B cell (primary cell): ENCODE measurements at regions of chr7 and their contacts with region 1.

Region 1: DNA sequence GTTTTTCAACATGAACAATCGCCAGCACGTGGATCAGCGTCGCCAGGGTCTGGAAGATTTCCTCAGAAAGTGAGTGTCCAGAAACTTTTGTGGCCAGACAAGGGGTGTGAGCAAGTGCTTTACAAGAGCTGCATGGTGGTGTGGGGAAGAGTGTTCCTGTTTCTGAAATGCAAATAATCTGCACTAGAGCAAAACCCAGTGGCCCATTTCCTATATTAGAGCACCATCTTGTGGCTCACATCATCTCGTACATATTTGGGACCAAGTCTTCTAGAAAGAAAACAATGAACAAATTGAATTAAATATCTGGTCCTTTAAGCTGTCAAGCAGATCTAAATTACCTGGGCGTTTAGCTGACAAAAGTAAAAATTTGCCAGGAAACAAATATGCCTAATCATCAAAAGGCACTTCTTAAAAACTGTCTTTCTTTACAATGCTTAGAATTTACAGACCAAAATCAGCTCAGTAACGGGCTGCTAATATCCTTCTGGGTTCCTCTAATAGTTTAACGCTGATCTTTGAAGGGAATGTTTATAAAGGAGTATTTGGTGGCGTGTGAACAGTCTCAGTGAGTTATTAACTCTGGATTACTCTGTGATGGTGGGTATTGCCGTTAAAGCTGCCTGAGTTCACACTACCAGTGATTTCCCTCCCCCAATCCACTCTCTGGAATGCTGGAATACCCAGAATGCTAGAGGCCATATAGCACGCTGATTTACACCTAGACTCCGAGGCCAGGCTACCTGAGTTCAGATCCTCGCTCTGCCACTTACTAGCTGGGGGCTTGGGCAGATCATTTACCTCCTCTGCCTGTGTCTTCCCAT is 73.6 kb downstream of the SNX10 start:
- DNase-seq: peak; percentile 89
- ATAC-seq: peak; percentile 95
- H3K4me3 ChIP-seq: no peak overlapping the region
- H3K4me3 Mint-ChIP-seq: no peak overlapping the region
- H3K27ac ChIP-seq: no peak overlapping the region
- H3K27ac Mint-ChIP-seq: peak overlapping the region; percentile 84
- H3K4me1 ChIP-seq: peaks cover 32 to 33% of the 10 kb centered on the region in 2 donors
- H3K4me1 Mint-ChIP-seq: peaks cover 34% of the 10 kb centered on the region
- H3K27me3 ChIP-seq: no peaks in the 10 kb centered on the region
- H3K27me3 Mint-ChIP-seq: no peaks in the 10 kb centered on the region
- CTCF ChIP-seq: peak; percentile 85

Region 2: DNA sequence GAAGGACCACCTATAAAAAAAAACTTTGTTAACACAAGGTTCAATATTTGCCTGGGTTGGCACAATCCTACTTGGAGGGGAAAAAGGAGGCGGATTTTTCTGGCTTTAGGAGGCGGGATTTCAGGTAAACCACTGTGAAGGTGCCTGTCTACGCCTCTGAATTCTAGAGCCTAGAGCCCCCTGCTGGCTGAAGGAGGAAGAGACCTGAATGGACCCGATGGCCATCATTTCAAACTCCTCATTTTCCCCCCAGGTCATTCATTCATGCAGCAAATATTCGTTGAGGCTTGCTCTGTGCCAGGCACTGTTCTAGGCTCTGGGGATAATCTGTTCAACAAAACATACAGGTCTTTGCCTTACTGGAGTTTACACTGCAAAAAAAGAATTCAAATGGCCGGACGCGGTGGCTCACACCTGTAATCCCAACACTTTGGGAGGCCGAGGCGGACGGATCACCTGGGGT is 303.6 kb before region 1 on chr7:
- CTCF ChIA-PET with region 1: interaction called, 8 read pairs
- POLR2A ChIA-PET with region 1: no interaction called
- intact Hi-C with region 1: loop called (anchors 1 kb)
- DNase-seq: peak; percentile 77
- ATAC-seq: peak; percentile 83
- H3K4me3 ChIP-seq: no peak overlapping the region
- H3K4me3 Mint-ChIP-seq: no peak overlapping the region
- H3K27ac ChIP-seq: no peak overlapping the region
- H3K27ac Mint-ChIP-seq: no peak overlapping the region
- H3K4me1 ChIP-seq: no peaks in the 10 kb centered on the region
- H3K4me1 Mint-ChIP-seq: peaks cover 5% of the 10 kb centered on the region
- H3K27me3 ChIP-seq: peaks cover 0 to 38% (median 14%) of the 10 kb centered on the region in 4 experiments
- H3K27me3 Mint-ChIP-seq: peaks cover 60% of the 10 kb centered on the region
- CTCF ChIP-seq: peak; percentile 92

Region 3: DNA sequence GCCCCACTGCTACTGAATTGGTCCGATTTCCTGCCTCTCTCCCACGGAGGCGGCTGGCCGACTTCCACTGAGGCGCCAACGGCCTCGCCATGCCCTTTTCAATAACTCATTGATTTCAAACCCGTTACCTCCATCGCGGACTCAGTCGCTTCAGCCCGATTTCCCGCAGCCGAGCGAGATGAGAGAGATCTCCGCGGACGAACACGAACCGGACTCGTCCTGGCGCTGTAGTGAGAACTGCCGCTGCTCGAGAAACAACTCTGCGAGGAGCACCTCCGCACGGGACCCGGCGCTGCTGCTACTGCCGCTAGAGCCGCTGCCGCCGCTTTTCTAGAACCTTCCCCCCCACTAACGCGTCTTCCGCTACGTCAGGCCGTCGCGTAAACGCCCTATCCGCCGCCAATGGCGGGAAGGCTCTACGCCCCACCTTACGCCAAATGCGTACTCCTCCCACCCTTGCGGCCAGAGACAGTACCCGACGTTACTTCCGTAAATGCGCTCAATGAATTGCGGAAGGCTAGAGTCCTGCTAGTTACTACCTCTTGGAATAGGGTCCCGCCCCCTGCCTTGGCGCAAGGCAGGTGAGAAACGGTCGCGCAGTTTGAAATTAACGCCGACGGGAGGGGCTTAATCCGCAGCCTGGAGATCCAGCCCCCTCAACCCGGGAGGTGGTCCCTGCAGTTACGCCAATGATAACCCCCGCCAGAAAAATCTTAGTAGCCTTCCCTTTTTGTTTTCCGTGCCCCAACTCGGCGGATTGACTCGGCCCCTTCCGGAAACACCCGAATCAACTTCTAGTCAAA is 164.6 kb before region 1 on chr7 and contains the start of gene HNRNPA2B1:
- CTCF ChIA-PET with region 1: interaction called, 84 read pairs
- POLR2A ChIA-PET with region 1: interaction called, 4 read pairs
- intact Hi-C with region 1: loop called (anchors 1 kb)
- DNase-seq: peak; percentile 100
- ATAC-seq: peak; percentile 65
- H3K4me3 ChIP-seq: peak within 1 kb of the TSS; percentile 80 to 100 (median 100)
- H3K4me3 Mint-ChIP-seq: peak within 1 kb of the TSS; percentile 99
- H3K27ac ChIP-seq: peak within 1 kb of the TSS; percentile 97 to 99
- H3K27ac Mint-ChIP-seq: peak within 1 kb of the TSS; percentile 100
- H3K4me1 ChIP-seq: peaks cover 37 to 40% of the 10 kb centered on the region in 2 donors
- H3K4me1 Mint-ChIP-seq: peaks cover 53% of the 10 kb centered on the region
- H3K27me3 ChIP-seq: no peaks in the 10 kb centered on the region
- H3K27me3 Mint-ChIP-seq: no peaks in the 10 kb centered on the region
- CTCF ChIP-seq: no peak
- total RNA-seq, gene HNRNPA2B1: 524 and 536 TPM in 2 replicates

Region 4: GRCh38 chr7:26318921-26319320 is 46.4 kb before region 1 on chr7:
- CTCF ChIA-PET with region 1: interaction called, 8 read pairs
- POLR2A ChIA-PET with region 1: no interaction called
- intact Hi-C with region 1: loop called (anchors 2 kb)
- DNase-seq: no peak
- ATAC-seq: no peak
- H3K4me3 ChIP-seq: no peak overlapping the region
- H3K4me3 Mint-ChIP-seq: no peak overlapping the region
- H3K27ac ChIP-seq: peak overlapping the region in 1 of 2 donors; percentile 74
- H3K27ac Mint-ChIP-seq: peak overlapping the region; percentile 61
- H3K4me1 ChIP-seq: peaks cover 41% of the 10 kb centered on the region in 2 donors
- H3K4me1 Mint-ChIP-seq: peaks cover 68% of the 10 kb centered on the region
- H3K27me3 ChIP-seq: no peaks in the 10 kb centered on the region
- H3K27me3 Mint-ChIP-seq: no peaks in the 10 kb centered on the region
- CTCF ChIP-seq: no peak

Region 5: DNA sequence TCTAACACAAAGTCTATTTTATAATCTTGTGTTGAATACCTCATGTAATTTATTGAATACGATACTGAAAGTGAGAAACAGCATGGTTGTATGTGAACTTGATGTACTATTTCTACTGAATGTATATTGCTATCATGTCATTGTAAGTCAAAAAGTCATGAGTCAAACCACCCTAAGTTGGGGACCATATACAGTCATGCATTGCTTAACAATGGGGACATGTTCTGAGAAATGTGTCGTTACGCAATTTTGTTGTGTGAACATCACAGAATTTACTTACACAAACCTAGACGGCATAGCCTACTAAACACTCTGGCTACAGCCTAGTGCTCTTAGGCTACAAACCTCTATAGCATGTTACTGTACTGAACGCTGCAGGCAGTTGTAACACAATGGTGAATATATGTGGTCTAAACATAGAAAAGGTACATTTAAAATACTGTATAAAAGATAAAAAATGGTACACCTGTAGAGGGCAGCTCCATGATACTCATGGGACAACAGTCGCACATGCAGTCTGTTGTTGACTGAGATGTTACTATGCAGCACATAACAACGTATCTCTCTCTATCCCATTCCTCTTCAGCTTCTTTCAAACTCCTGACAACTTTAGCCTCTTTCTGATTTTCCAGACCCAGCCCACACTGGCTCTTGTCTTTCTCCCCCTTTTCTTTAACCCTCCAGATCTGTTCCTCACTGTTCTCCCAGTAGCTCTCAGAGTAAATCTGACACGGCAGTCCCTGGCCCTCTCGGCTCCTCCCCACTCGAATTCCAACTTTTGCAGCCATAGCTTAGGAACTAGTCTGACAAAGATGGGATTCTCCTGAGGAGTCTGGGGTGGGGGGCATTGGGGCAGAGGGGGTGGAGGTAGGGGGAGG is 16.4 kb after region 1 on chr7:
- CTCF ChIA-PET with region 1: interaction called, 16 read pairs
- POLR2A ChIA-PET with region 1: no interaction called
- intact Hi-C with region 1: no loop called
- DNase-seq: no peak
- ATAC-seq: no peak
- H3K4me3 ChIP-seq: no peak overlapping the region
- H3K4me3 Mint-ChIP-seq: no peak overlapping the region
- H3K27ac ChIP-seq: no peak overlapping the region
- H3K27ac Mint-ChIP-seq: no peak overlapping the region
- H3K4me1 ChIP-seq: peaks cover 4% of the 10 kb centered on the region in 2 donors
- H3K4me1 Mint-ChIP-seq: peaks cover 4% of the 10 kb centered on the region
- H3K27me3 ChIP-seq: no peaks in the 10 kb centered on the region
- H3K27me3 Mint-ChIP-seq: no peaks in the 10 kb centered on the region
- CTCF ChIP-seq: no peak

Region 6: DNA sequence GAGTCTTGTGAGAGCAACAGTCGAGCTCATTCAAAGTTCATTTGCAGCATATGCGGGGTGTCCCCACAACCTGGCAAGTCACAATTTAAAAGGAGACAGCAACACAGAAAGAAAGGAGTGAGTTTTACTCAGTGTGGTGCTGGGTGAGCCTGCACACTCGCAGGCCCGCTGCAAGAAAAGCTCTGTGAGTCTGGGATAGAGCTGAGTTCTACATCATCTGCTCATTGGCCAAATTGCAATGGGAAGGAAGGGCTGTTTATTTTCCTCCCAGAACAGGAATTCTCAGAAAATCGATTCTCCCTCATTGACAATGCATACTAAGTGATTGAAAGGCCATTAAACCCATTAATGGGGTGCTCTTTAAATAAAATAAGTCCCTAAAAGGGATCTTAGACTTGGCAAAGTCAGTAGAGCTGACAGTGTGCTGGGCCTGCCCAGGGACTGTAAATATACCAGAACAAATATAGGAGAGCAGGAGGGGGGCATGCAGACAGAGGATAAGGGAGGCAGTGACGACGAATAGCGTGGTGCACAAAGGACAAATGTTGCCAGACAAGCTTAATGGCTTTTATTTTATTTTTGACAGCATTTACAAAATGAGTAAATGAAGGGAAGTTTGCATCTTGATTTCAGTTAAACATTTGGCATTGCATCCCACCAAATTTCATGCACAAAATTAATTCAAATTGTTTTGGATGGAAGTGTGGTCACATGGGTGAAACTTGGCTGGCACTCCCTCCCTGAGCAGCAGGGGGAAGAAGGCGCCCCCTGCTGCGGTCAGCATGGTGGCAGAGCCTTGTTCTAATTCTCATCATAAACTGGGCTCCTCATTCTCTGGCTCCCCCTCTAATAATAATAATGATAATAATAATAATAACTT is 142.1 kb after region 1 on chr7:
- CTCF ChIA-PET with region 1: interaction called, 55 read pairs
- POLR2A ChIA-PET with region 1: no interaction called
- intact Hi-C with region 1: no loop called
- DNase-seq: no peak
- ATAC-seq: no peak
- H3K4me3 ChIP-seq: no peak overlapping the region
- H3K4me3 Mint-ChIP-seq: no peak overlapping the region
- H3K27ac ChIP-seq: no peak overlapping the region
- H3K27ac Mint-ChIP-seq: no peak overlapping the region
- H3K4me1 ChIP-seq: no peaks in the 10 kb centered on the region
- H3K4me1 Mint-ChIP-seq: no peaks in the 10 kb centered on the region
- H3K27me3 ChIP-seq: peaks cover 0 to 9% (median 6%) of the 10 kb centered on the region in 4 experiments
- H3K27me3 Mint-ChIP-seq: peaks cover 51% of the 10 kb centered on the region
- CTCF ChIP-seq: no peak

Region 7: GRCh38 chr7:27160546-27161213 is 795.4 kb after region 1 on chr7:
- CTCF ChIA-PET with region 1: interaction called, 122 read pairs
- POLR2A ChIA-PET with region 1: no interaction called
- intact Hi-C with region 1: loop called (anchors 1 kb)
- DNase-seq: peak; percentile 91
- ATAC-seq: peak; percentile 84
- H3K4me3 ChIP-seq: peak overlapping the region; percentile 24 to 76 (median 62)
- H3K4me3 Mint-ChIP-seq: peak overlapping the region; percentile 86
- H3K27ac ChIP-seq: no peak overlapping the region
- H3K27ac Mint-ChIP-seq: peak overlapping the region; percentile 67
- H3K4me1 ChIP-seq: peaks cover 49 to 57% of the 10 kb centered on the region in 2 donors
- H3K4me1 Mint-ChIP-seq: peaks cover 38% of the 10 kb centered on the region
- H3K27me3 ChIP-seq: peaks cover 1 to 88% (median 75%) of the 10 kb centered on the region in 4 experiments
- H3K27me3 Mint-ChIP-seq: peaks cover 70% of the 10 kb centered on the region
- CTCF ChIP-seq: peak; percentile 100

Region 8: GRCh38 chr7:27434756-27435400 is 1069.6 kb after region 1 on chr7:
- CTCF ChIA-PET with region 1: no interaction called
- POLR2A ChIA-PET with region 1: no interaction called
- intact Hi-C with region 1: no loop called
- DNase-seq: no peak
- ATAC-seq: no peak
- H3K4me3 ChIP-seq: no peak overlapping the region
- H3K4me3 Mint-ChIP-seq: no peak overlapping the region
- H3K27ac ChIP-seq: no peak overlapping the region
- H3K27ac Mint-ChIP-seq: no peak overlapping the region
- H3K4me1 ChIP-seq: peaks cover 0 to 4% of the 10 kb centered on the region in 2 donors
- H3K4me1 Mint-ChIP-seq: peaks cover 7% of the 10 kb centered on the region
- H3K27me3 ChIP-seq: no peaks in the 10 kb centered on the region
- H3K27me3 Mint-ChIP-seq: peaks cover 30% of the 10 kb centered on the region
- CTCF ChIP-seq: no peak